Right cardiac atrium (tissue), 5 donors: ENCODE measurements at regions of chr1 and their contacts with region 1.

Region 1: DNA sequence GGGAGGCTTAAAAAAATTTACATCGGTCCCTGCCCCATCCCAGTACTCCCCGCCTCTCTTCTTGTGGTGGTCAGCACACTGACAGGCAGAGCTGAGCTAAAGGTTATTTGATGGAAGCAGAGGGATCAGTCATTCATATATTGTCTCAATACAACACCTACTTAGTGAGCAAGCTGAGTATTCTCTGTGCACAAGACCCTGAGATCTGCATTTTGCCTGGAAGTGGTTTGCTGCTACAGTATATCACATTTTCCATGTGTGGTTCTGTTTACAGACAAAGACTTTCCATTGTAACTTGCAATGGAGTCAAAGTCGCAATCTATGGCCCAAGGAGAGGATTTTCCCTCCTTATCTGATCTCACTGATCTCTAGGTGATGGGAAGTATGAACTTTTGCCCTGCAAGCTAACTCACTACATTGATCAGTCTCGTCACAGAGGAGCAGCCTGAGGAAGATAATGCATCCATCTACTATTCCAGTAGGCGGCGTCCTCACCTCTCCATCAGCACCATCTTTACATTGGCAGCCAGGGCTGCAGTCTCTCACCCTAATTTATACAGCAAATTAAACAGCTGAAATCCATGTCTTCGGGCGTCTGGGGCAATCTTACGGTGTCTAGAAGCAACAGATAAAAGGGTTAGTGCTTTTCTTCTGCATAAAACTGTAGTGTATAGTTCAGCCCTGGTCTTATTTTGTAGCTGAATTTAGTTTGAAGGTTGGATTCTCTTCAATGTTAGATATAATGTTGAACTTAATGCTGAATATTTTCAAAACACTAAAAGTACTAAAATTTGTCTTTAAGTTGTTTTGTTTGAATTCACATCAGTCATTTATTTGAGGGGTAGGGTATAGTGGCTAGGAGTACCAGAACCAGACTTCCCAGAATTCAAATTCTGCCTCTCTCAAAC is 3.2 kb upstream of the TRAF5 start:
- DNase-seq: peak in 1 of 3 donors; percentile 57
- ATAC-seq: peak; percentile 46 to 56
- H3K4me3 ChIP-seq: no peak overlapping the region
- H3K27ac ChIP-seq: no peak overlapping the region
- H3K4me1 ChIP-seq: peaks cover 3% of the 10 kb centered on the region
- H3K27me3 ChIP-seq: no peaks in the 10 kb centered on the region

Region 2: DNA sequence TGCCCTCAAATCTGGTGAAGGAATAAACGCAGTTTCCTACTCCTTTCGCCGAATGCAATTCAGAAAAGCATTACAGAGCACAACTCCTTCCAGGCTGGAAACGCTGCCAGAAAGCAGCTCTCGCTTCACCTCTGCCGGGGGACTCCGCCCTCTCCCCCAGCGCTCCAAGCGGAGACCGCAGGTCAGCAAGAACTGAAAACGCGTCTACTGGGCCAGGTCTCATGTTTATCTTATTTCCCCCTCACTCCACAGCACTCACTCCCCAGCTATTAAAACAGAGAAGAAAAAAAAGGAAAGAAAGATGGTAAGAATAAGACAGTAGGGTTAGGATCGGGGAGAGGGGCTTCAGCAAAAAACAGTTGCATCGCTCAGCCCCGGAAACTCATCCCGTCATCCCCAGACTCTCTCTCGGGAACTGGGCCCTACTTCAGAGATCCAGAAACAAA is 65.1 kb before region 1 on chr1:
- intact Hi-C with region 1: no loop called
- DNase-seq: peak; percentile 88 to 94 (median 93)
- ATAC-seq: peak; percentile 64 to 72
- H3K4me3 ChIP-seq: peak overlapping the region; percentile 90
- H3K27ac ChIP-seq: peak overlapping the region; percentile 99
- H3K4me1 ChIP-seq: no peaks in the 10 kb centered on the region
- H3K27me3 ChIP-seq: no peaks in the 10 kb centered on the region

Region 3: DNA sequence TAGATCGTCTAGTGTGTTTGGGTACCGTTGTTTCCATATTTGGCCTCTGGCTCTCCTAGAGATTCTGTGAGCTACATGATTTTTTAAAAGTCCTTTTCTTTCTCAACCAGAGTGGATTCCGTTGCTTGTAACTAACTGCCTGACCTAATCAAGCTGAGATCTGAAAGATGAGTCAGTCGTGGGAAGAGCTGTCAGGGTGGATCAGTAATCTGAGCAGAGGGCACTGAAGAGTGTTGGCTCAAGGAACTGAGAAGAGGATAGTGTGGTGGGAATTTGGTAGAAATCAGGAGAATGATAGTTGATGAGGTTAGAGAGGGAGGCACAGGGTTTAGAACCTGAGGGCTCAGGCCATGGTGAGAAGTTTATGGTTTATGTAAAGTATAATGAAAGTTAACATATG is 55.4 kb after region 1 on chr1:
- intact Hi-C with region 1: loop called in 1 of 4 experiments (anchors 10 kb)
- DNase-seq: no peak
- ATAC-seq: no peak
- H3K4me3 ChIP-seq: no peak overlapping the region
- H3K27ac ChIP-seq: no peak overlapping the region
- H3K4me1 ChIP-seq: no peaks in the 10 kb centered on the region
- H3K27me3 ChIP-seq: no peaks in the 10 kb centered on the region

Region 4: GRCh38 chr1:211476200-211476849 is 152.9 kb after region 1 on chr1:
- intact Hi-C with region 1: loop called in 1 of 4 experiments (anchors 10 kb)
- DNase-seq: peak; percentile 64 to 80 (median 68)
- ATAC-seq: peak; percentile 44 to 49
- H3K4me3 ChIP-seq: no peak overlapping the region
- H3K27ac ChIP-seq: no peak overlapping the region
- H3K4me1 ChIP-seq: no peaks in the 10 kb centered on the region
- H3K27me3 ChIP-seq: no peaks in the 10 kb centered on the region